ENCODE measurements at regions of chr2 and their contacts with region 1.

Region 1: GRCh38 chr2:62456721-62457539 is 49.1 kb downstream of the TMEM17 start:
- DNase-seq: peak; percentile 72
- ATAC-seq: peak; percentile 87
- H3K4me3 Mint-ChIP-seq: peak overlapping the region; percentile 67
- H3K27ac Mint-ChIP-seq: no peak overlapping the region
- H3K4me1 Mint-ChIP-seq: peaks cover 4% of the 10 kb centered on the region
- H3K27me3 Mint-ChIP-seq: peaks cover 3% of the 10 kb centered on the region
- CTCF ChIP-seq: peak; percentile 59

Region 2: DNA sequence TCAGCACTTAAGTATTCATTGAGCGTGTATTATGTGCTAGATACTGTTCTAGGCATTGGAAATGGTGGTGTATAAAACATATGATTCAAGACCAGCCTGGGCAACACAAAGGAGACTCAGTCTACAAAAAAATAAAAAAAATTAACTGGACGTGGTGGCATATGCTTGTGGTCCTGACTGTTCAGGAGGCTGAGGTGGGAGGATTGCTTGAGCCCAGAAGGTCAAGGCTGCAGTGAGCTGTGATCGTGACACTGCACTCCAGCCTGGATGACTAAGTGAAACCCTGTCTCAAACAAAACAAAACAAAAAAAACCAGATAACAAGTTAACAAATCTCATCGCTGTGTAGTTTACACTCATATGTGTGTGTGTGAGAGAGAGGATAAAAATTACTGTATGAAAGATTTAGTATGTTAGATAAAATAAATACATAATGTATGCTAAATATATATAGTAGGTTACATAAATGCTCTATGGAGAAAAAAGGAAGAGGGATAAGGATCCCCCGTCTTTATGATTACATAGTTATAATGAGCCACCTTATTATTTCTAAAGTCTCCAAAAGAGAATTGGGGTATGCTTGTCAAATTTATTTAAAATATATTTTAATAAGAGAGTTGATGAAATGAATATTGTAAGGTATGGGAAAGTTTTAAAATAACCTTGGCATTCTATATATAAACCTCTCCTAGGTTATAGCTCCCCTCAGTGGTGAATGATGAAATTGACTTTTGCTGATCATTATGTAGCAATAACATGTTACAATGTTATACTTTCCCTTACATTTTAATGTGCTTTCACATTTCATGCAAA is 317.8 kb after region 1 on chr2:
- CTCF ChIA-PET with region 1: interaction called, 187 read pairs
- POLR2A ChIA-PET with region 1: interaction called, 3 read pairs
- intact Hi-C with region 1: loop called (anchors 1 kb)
- DNase-seq: no peak
- ATAC-seq: peak; percentile 21
- H3K4me3 Mint-ChIP-seq: no peak overlapping the region
- H3K27ac Mint-ChIP-seq: no peak overlapping the region
- H3K4me1 Mint-ChIP-seq: peaks cover 1% of the 10 kb centered on the region
- H3K27me3 Mint-ChIP-seq: no peaks in the 10 kb centered on the region
- CTCF ChIP-seq: peak; percentile 87

Region 3: DNA sequence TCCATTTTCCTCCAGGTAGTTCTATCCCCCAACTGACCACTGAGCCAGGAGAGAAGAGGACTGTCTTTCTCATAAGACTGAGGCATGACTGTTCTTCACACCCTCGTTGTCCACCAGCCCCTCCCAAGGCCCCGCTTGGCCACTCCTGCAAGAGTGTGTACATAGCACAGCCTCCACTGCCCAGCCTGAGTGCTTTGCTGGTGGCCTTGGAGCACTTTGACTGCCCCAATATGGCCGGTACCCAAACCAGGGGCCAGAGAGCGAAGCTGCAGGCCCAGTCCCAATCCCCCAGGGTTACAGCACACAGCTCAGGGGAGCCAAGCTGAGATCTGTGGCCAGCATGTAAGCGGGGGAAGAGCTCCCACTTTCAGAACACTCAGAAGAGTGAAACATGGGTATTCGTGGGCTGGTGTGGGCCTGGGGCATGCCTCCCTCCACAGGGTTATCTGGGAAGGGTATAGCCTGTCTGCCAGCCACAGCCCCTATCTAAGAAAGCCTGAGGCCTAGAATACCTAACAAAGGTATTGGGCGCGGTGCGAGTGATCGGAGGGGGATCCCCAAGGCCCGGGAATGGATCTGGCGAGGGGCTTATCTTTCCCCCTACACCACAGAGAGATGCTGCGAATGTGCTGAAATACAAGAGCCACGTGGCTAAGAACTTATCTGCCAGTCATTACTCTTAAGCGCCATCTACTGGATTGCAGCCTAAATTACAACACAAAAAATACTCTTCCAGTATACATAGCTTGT is 967.6 kb after region 1 on chr2:
- CTCF ChIA-PET with region 1: interaction called, 15 read pairs
- POLR2A ChIA-PET with region 1: no interaction called
- intact Hi-C with region 1: loop called (anchors 1 kb)
- DNase-seq: no peak
- ATAC-seq: no peak
- H3K4me3 Mint-ChIP-seq: no peak overlapping the region
- H3K27ac Mint-ChIP-seq: no peak overlapping the region
- H3K4me1 Mint-ChIP-seq: no peaks in the 10 kb centered on the region
- H3K27me3 Mint-ChIP-seq: no peaks in the 10 kb centered on the region
- CTCF ChIP-seq: no peak

Region 4: GRCh38 chr2:63488118-63488713 is 1031.3 kb after region 1 on chr2:
- CTCF ChIA-PET with region 1: interaction called, 6 read pairs
- POLR2A ChIA-PET with region 1: no interaction called
- intact Hi-C with region 1: loop called (anchors 1 kb)
- DNase-seq: no peak
- ATAC-seq: no peak
- H3K4me3 Mint-ChIP-seq: no peak overlapping the region
- H3K27ac Mint-ChIP-seq: no peak overlapping the region
- H3K4me1 Mint-ChIP-seq: peaks cover 1% of the 10 kb centered on the region
- H3K27me3 Mint-ChIP-seq: no peaks in the 10 kb centered on the region
- CTCF ChIP-seq: no peak

Region 5: DNA sequence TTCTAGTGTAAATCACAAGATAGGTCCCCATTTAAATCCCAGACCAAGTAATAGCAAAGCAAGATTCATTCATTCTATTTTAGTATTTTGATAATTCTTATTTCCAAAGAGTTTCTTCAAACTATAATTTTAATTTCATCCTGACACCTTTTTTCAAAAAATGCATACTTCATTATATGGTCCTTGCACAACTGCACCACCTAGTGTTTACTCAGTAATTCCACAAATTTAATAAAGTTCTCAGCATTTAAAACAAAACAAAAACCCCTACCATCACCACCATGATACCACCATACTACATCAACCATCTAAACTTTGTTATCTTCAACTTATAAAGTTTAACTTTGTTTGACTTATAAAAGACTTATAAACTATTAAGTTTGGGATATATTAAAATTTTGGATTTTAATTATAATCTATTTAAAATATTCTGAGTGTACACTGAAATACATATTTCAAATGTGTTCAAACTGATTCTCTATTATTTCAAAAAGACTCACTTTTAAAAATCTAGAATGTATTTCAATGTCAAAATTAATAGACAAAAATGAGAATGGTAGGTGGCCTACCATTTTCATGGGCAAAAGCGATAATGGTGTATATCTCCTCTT is 1087.2 kb after region 1 on chr2:
- CTCF ChIA-PET with region 1: interaction called, 8 read pairs
- POLR2A ChIA-PET with region 1: no interaction called
- intact Hi-C with region 1: loop called (anchors 1 kb)
- DNase-seq: no peak
- ATAC-seq: no peak
- H3K4me3 Mint-ChIP-seq: no peak overlapping the region
- H3K27ac Mint-ChIP-seq: no peak overlapping the region
- H3K4me1 Mint-ChIP-seq: peaks cover 4% of the 10 kb centered on the region
- H3K27me3 Mint-ChIP-seq: no peaks in the 10 kb centered on the region
- CTCF ChIP-seq: no peak

Region 6: DNA sequence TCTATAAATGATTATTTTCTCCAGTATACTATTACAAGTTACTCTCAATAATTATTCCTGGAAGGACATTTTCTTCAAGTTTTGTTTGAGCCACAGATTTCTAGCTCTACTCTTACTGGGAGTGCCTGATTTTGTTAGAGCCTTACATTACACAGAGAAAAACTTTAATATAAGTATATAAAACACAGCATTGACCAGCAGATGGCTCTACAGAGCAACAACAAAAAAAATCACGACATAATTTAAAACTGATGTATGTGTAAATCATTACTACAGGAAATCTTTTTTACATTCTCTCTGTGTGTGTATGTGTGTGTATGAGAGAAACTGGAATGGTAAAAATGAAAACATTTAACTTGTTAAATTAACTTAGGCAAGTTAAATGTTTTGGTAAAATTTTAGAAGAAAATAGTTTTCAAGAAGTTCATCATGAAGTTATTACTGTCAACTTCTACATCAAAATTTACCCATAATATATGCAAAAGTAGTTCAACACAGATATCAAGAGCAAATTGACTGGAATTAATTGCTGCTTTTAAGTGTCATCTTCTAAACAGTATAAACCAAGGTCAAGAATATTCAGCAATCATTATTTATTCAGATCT is 1235.2 kb after region 1 on chr2:
- CTCF ChIA-PET with region 1: no interaction called
- POLR2A ChIA-PET with region 1: no interaction called
- intact Hi-C with region 1: loop called (anchors 2 kb)
- DNase-seq: no peak
- ATAC-seq: peak; percentile 18
- H3K4me3 Mint-ChIP-seq: no peak overlapping the region
- H3K27ac Mint-ChIP-seq: no peak overlapping the region
- H3K4me1 Mint-ChIP-seq: no peaks in the 10 kb centered on the region
- H3K27me3 Mint-ChIP-seq: no peaks in the 10 kb centered on the region
- CTCF ChIP-seq: peak; percentile 53

Region 7: DNA sequence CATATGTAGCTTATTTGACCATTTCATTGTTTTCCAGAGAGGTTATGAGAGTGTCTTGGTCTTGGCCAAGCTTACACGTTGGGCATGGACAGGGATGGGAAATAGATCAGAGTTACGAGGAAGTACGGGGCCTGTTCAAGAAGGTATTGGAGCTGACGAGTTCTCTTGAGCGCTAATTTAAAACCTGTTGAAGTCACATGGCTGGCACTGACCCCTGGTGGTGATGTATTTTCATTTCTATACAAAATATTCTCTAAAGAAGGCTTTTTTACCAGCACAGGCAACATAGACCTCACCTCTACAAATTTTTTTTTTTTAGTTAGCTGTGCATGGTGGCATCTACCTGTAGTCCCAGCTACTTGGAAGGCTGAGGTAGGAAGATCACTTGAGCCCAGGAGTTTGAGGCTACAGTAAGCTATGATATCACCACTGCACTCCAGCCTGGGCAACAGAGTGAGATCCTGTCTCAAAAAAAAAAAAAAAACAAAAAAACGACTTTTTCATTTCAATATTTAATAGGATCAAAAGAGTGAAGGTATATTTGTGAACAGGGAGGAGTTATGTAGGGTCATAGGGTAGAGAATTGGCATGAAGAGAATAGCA is 1404.4 kb after region 1 on chr2:
- CTCF ChIA-PET with region 1: interaction called, 7 read pairs
- POLR2A ChIA-PET with region 1: no interaction called
- intact Hi-C with region 1: loop called (anchors 1 kb)
- DNase-seq: no peak
- ATAC-seq: peak; percentile 70
- H3K4me3 Mint-ChIP-seq: no peak overlapping the region
- H3K27ac Mint-ChIP-seq: no peak overlapping the region
- H3K4me1 Mint-ChIP-seq: peaks cover 8% of the 10 kb centered on the region
- H3K27me3 Mint-ChIP-seq: no peaks in the 10 kb centered on the region
- CTCF ChIP-seq: no peak

Measured in activated B cell treated with CpG ODN at 0.5 μM for 24 hours (primary cell).